Spleen (tissue), 13 donors: ENCODE measurements at regions of chr10 and their contacts with region 1.

Region 1: DNA sequence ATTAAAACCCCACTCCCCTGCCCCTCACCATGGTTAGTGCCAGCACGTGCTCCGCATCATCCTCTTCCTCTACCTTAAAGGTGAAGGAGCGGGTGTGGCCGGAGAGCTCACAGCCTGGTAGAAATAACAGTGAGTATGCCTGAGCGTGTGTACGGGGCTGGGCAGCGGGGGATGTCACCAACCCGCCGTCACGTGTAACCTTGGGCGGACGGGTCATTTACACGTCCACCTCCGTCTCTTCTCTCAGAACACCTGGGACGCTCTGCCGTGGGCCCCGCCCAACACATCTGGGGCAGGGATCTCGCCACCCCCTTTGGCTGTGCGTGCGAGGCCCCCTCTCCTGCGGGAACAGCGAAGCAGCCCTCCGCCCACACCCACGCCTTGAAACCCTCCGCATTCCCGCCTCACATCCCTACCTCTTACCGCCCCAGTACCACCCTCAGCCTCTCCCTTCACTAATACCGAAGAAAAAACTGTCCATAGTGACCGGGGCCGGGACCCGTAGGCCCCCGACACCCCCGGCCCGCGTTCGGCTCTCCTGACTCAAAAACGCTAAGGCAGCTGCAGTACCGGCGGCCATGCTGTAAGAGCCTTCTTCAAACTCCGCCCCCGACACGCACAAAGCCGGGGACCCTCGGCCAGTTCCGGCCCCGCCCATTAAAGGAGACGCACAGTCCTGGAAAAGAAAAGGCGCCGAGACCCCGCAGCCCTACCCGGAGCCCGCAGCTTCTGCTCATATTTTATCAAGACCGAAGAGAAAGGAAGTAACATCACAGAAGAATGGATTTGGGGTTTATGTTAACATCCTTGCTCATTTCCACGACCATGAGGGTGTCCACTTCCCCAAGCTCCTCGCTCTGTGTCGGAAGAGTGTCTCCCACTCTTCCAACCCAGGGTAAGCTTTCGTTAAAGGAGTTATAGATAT is at the start of gene NPM3:
- DNase-seq: peak; percentile 94
- H3K4me3 ChIP-seq: peak within 1 kb of the TSS; percentile 30 to 88 (median 64)
- H3K27ac ChIP-seq: peak within 1 kb of the TSS; percentile 37 to 81 (median 50)
- H3K4me1 ChIP-seq: peaks cover 14 to 81% (median 66%) of the 10 kb centered on the region in 6 donors
- H3K27me3 ChIP-seq: peaks cover 0 to 22% (median 18%) of the 10 kb centered on the region in 7 donors
- CTCF ChIP-seq: no peak
- POLR2A ChIP-seq: no peak
- total RNA-seq, gene NPM3: 16.8 to 46.9 (median 24.6) TPM

Region 2: DNA sequence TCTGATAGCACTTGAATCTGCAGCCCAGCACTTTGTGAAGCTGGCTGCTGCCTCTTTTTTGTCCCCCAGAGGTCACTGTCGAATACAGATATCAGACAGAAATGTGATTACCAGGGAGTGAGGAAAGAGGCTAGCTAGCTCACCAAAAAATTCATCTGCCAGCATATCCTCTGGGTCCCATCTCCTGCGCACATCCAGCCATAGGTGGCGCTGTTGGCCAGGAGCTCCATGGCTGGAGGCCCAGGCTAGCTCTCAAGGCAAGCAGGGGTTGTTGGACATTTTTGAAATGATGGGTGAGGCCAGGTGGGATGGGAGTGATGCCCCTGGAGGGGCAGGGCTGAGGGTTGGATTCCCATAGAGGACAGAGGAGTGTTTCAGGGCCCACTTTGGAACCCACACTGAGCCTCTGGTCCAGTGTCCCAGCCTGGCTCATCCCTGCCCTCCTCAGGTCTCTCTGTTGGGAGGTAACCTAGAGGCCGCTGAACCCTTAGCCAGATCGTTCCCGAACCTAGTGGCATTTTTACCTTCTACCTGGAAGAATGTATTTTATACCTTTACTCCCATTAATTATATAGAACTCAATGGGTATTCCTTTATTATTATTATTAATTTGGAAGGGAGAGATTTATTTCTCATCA is 180.2 kb before region 1 on chr10:
- intact Hi-C with region 1: loop called (anchors 10 kb)
- DNase-seq: peak; percentile 86
- H3K4me3 ChIP-seq: no peak overlapping the region
- H3K27ac ChIP-seq: no peak overlapping the region
- H3K4me1 ChIP-seq: no peaks in the 10 kb centered on the region
- H3K27me3 ChIP-seq: no peaks in the 10 kb centered on the region
- CTCF ChIP-seq: peak; percentile 45 to 86 (median 74)
- POLR2A ChIP-seq: no peak